GM12878 (cell line): ENCODE measurements at regions of chr15 and their contacts with region 1.

Region 1: DNA sequence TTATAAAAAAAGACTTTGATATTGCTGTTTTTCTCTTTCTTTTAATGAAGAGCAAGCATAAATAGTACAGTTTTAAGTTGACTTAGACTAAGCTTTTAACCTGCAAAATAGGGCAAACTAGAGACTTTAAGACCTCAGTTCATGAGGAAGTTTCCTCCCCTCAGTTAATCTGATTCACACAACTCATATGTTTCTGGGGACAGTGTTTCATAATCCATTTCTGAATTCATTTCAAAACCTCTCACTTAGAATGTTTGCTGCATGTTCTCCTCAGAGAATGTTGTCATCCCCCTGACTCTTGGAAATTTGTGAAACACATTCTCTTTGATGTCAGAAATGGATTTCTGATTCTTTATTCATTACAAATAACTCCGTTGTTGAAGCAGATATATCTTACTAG is 79.3 kb upstream of the SKOR1 start:
- DNase-seq: no peak
- ATAC-seq: no peak
- H3K4me3 ChIP-seq: no peak overlapping the region
- H3K27ac ChIP-seq: no peak overlapping the region
- H3K4me1 ChIP-seq: peaks cover 7% of the 10 kb centered on the region
- H3K27me3 ChIP-seq: no peaks in the 10 kb centered on the region
- CTCF ChIP-seq: no peak
- EP300 ChIP-seq: no peak
- POLR2A ChIP-seq: no peak
- RAD21 ChIP-seq: no peak

Region 2: DNA sequence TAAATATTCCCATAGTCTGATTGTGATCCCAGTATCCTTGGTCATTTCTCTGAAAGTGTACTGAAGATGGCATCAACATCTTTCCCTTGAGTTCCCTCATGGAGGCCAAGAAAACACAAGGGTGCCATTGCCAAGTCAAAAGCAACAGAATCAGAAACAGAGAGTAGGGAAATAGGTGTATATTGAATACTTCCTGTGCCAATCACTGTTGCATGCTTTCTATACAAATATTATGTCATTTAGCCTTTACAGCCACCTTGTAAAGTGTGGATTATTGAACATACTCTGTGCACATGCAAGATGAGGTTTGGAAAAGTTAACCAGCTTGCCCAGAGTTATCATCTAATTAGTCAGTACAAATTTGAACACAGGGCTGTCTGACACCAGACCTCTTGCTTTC is 85.6 kb before region 1 on chr15:
- CTCF ChIA-PET with region 1: no interaction called
- POLR2A ChIA-PET with region 1: no interaction called
- RAD21 ChIA-PET with region 1: no interaction called
- SMC1A ChIA-PET with region 1: no interaction called
- in situ Hi-C with region 1: no loop called
- intact Hi-C with region 1: no loop called
- DNase-seq: no peak
- ATAC-seq: no peak
- H3K4me3 ChIP-seq: no peak overlapping the region
- H3K27ac ChIP-seq: no peak overlapping the region
- H3K4me1 ChIP-seq: no peaks in the 10 kb centered on the region
- H3K27me3 ChIP-seq: no peaks in the 10 kb centered on the region
- CTCF ChIP-seq: no peak
- EP300 ChIP-seq: no peak
- POLR2A ChIP-seq: no peak
- RAD21 ChIP-seq: no peak

Region 3: GRCh38 chr15:67670647-67671305 is 75.2 kb before region 1 on chr15:
- CTCF ChIA-PET with region 1: no interaction called
- POLR2A ChIA-PET with region 1: no interaction called
- RAD21 ChIA-PET with region 1: no interaction called
- SMC1A ChIA-PET with region 1: no interaction called
- in situ Hi-C with region 1: no loop called
- intact Hi-C with region 1: no loop called
- DNase-seq: no peak
- ATAC-seq: no peak
- H3K4me3 ChIP-seq: no peak overlapping the region
- H3K27ac ChIP-seq: no peak overlapping the region
- H3K4me1 ChIP-seq: no peaks in the 10 kb centered on the region
- H3K27me3 ChIP-seq: no peaks in the 10 kb centered on the region
- CTCF ChIP-seq: no peak
- EP300 ChIP-seq: no peak
- POLR2A ChIP-seq: no peak
- RAD21 ChIP-seq: no peak

Region 4: DNA sequence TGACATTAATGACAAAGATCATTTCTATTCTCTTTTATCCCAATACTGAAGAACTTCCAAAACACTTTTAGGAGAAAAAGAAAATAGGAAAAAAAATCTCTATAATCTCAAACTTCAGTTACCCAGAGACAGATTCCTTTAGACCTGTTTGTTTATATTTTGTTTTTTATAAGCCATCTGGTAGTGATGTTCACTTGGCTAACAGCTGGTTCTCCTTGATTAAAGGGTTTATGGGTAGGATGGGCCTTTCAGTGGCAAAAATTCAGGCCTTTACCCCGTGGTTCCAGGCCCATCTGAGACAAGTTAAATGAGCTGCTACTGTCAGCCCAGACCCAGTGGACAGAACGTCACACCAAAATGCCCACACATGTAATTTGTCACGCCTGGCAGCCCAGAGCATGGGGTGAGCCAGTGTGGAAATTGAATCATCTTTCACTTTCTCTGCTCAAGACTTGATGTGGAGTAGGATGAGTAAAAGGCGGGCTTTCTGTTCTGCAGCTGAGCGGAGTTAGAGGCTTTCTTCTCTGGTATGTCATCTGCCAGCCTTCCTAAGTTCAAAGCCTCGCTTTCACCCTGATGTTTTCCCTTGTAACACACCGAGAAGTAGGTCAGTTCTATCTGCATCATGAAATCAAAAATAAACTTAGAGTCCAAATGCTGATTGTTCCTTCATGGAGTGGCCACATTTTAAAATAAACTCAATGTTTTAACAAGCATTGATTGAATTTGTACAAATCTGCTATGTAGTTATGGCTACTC is 16.8 kb after region 1 on chr15:
- CTCF ChIA-PET with region 1: interaction called, 8 read pairs
- POLR2A ChIA-PET with region 1: interaction called, 8 read pairs
- RAD21 ChIA-PET with region 1: interaction called, 13 read pairs
- SMC1A ChIA-PET with region 1: interaction called, 21 read pairs
- in situ Hi-C with region 1: no loop called
- intact Hi-C with region 1: no loop called
- DNase-seq: peak; percentile 85
- ATAC-seq: peak; percentile 98
- H3K4me3 ChIP-seq: no peak overlapping the region
- H3K27ac ChIP-seq: peak overlapping the region; percentile 54
- H3K4me1 ChIP-seq: peaks cover 29% of the 10 kb centered on the region
- H3K27me3 ChIP-seq: no peaks in the 10 kb centered on the region
- CTCF ChIP-seq: no peak
- EP300 ChIP-seq: peak; percentile 49 to 67; a peak in 2 of 4 replicates
- POLR2A ChIP-seq: no peak
- RAD21 ChIP-seq: no peak

Region 5: GRCh38 chr15:67805666-67806538 is 59.9 kb after region 1 on chr15:
- CTCF ChIA-PET with region 1: no interaction called
- POLR2A ChIA-PET with region 1: no interaction called
- RAD21 ChIA-PET with region 1: no interaction called
- SMC1A ChIA-PET with region 1: no interaction called
- in situ Hi-C with region 1: no loop called
- intact Hi-C with region 1: no loop called
- DNase-seq: no peak
- ATAC-seq: no peak
- H3K4me3 ChIP-seq: no peak overlapping the region
- H3K27ac ChIP-seq: no peak overlapping the region
- H3K4me1 ChIP-seq: peaks cover 5% of the 10 kb centered on the region
- H3K27me3 ChIP-seq: no peaks in the 10 kb centered on the region
- CTCF ChIP-seq: no peak
- EP300 ChIP-seq: no peak
- POLR2A ChIP-seq: no peak
- RAD21 ChIP-seq: no peak